CD4-positive, alpha-beta T cell (primary cell): ENCODE measurements at regions of chr5 and their contacts with region 1.

Region 1: GRCh38 chr5:172293054-172293744 is 9.6 kb upstream of the UBTD2 start:
- DNase-seq: peak; percentile 28 to 83 (median 50)
- ATAC-seq: peak; percentile 100
- H3K4me3 ChIP-seq: no peak overlapping the region
- H3K4me3 Mint-ChIP-seq: no peak overlapping the region
- H3K27ac ChIP-seq: no peak overlapping the region
- H3K27ac Mint-ChIP-seq: no peak overlapping the region
- H3K4me1 ChIP-seq: peaks cover 6% of the 10 kb centered on the region
- H3K4me1 Mint-ChIP-seq: peaks cover 4% of the 10 kb centered on the region
- H3K27me3 ChIP-seq: no peaks in the 10 kb centered on the region
- H3K27me3 Mint-ChIP-seq: no peaks in the 10 kb centered on the region
- CTCF ChIP-seq: peak; percentile 83

Region 2: GRCh38 chr5:171418316-171418981 is 874.8 kb before region 1 on chr5:
- CTCF ChIA-PET with region 1: no interaction called
- POLR2A ChIA-PET with region 1: no interaction called
- intact Hi-C with region 1: loop called in 1 of 2 experiments (anchors 5 kb)
- DNase-seq: peak in 12 of 14 experiments; percentile 15 to 67 (median 35)
- ATAC-seq: peak; percentile 54
- H3K4me3 ChIP-seq: peak overlapping the region; percentile 43
- H3K4me3 Mint-ChIP-seq: peak overlapping the region; percentile 80
- H3K27ac ChIP-seq: no peak overlapping the region
- H3K27ac Mint-ChIP-seq: no peak overlapping the region
- H3K4me1 ChIP-seq: peaks cover 22% of the 10 kb centered on the region
- H3K4me1 Mint-ChIP-seq: peaks cover 17% of the 10 kb centered on the region
- H3K27me3 ChIP-seq: peaks cover 16 to 24% of the 10 kb centered on the region in 2 experiments
- H3K27me3 Mint-ChIP-seq: peaks cover 30% of the 10 kb centered on the region
- CTCF ChIP-seq: peak; percentile 68

Region 3: GRCh38 chr5:171907725-171908343 is 385.4 kb before region 1 on chr5:
- CTCF ChIA-PET with region 1: interaction called, 6 read pairs
- POLR2A ChIA-PET with region 1: interaction called, 3 read pairs
- intact Hi-C with region 1: loop called (anchors 1 to 2 kb)
- DNase-seq: peak in 12 of 14 experiments; percentile 8 to 73 (median 18)
- ATAC-seq: peak; percentile 83
- H3K4me3 ChIP-seq: no peak overlapping the region
- H3K4me3 Mint-ChIP-seq: no peak overlapping the region
- H3K27ac ChIP-seq: no peak overlapping the region
- H3K27ac Mint-ChIP-seq: no peak overlapping the region
- H3K4me1 ChIP-seq: peaks cover 6% of the 10 kb centered on the region
- H3K4me1 Mint-ChIP-seq: peaks cover 58% of the 10 kb centered on the region
- H3K27me3 ChIP-seq: no peaks in the 10 kb centered on the region
- H3K27me3 Mint-ChIP-seq: no peaks in the 10 kb centered on the region
- CTCF ChIP-seq: peak; percentile 82

Region 4: DNA sequence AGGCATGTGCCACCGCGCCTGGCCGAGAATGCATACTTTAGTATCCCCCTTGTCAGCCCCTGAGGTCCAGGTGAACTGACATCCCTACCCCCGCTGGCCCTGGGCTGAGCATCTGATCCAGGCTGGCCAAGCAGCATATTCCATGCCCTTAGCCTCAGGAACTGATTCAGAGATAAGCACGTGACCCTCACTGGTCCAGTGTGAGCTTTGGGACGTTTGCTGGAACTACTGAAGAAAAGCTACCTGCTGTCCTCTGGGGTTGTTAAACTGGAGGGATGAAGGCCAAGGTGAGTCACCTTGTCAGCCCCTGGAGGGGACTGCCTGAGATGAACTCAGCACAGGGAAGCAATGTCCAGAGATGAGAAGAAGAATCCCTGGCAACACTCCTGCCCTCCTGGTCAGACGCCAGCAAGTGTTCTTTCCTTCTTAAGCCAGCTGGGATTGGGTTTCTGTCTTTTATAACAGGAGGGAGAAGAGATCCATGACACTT is 227.7 kb before region 1 on chr5:
- CTCF ChIA-PET with region 1: interaction called, 3 read pairs
- POLR2A ChIA-PET with region 1: no interaction called
- intact Hi-C with region 1: loop called in 1 of 2 experiments (anchors 5 kb)
- DNase-seq: peak in 1 of 14 experiments; percentile 34
- ATAC-seq: no peak
- H3K4me3 ChIP-seq: no peak overlapping the region
- H3K4me3 Mint-ChIP-seq: no peak overlapping the region
- H3K27ac ChIP-seq: peak overlapping the region; percentile 69 to 84
- H3K27ac Mint-ChIP-seq: peak overlapping the region; percentile 89
- H3K4me1 ChIP-seq: peaks cover 44% of the 10 kb centered on the region
- H3K4me1 Mint-ChIP-seq: peaks cover 76% of the 10 kb centered on the region
- H3K27me3 ChIP-seq: no peaks in the 10 kb centered on the region
- H3K27me3 Mint-ChIP-seq: no peaks in the 10 kb centered on the region
- CTCF ChIP-seq: no peak

Region 5: GRCh38 chr5:172322028-172322965 is 29.1 kb after region 1 on chr5:
- CTCF ChIA-PET with region 1: no interaction called
- POLR2A ChIA-PET with region 1: no interaction called
- intact Hi-C with region 1: no loop called
- DNase-seq: no peak
- ATAC-seq: no peak
- H3K4me3 ChIP-seq: no peak overlapping the region
- H3K4me3 Mint-ChIP-seq: no peak overlapping the region
- H3K27ac ChIP-seq: no peak overlapping the region
- H3K27ac Mint-ChIP-seq: no peak overlapping the region
- H3K4me1 ChIP-seq: no peaks in the 10 kb centered on the region
- H3K4me1 Mint-ChIP-seq: no peaks in the 10 kb centered on the region
- H3K27me3 ChIP-seq: no peaks in the 10 kb centered on the region
- H3K27me3 Mint-ChIP-seq: no peaks in the 10 kb centered on the region
- CTCF ChIP-seq: no peak

Region 6: GRCh38 chr5:172347496-172348052 is 54.4 kb after region 1 on chr5:
- CTCF ChIA-PET with region 1: no interaction called
- POLR2A ChIA-PET with region 1: no interaction called
- intact Hi-C with region 1: no loop called
- DNase-seq: no peak
- ATAC-seq: no peak
- H3K4me3 ChIP-seq: no peak overlapping the region
- H3K4me3 Mint-ChIP-seq: no peak overlapping the region
- H3K27ac ChIP-seq: no peak overlapping the region
- H3K27ac Mint-ChIP-seq: no peak overlapping the region
- H3K4me1 ChIP-seq: no peaks in the 10 kb centered on the region
- H3K4me1 Mint-ChIP-seq: no peaks in the 10 kb centered on the region
- H3K27me3 ChIP-seq: no peaks in the 10 kb centered on the region
- H3K27me3 Mint-ChIP-seq: no peaks in the 10 kb centered on the region
- CTCF ChIP-seq: no peak

Region 7: DNA sequence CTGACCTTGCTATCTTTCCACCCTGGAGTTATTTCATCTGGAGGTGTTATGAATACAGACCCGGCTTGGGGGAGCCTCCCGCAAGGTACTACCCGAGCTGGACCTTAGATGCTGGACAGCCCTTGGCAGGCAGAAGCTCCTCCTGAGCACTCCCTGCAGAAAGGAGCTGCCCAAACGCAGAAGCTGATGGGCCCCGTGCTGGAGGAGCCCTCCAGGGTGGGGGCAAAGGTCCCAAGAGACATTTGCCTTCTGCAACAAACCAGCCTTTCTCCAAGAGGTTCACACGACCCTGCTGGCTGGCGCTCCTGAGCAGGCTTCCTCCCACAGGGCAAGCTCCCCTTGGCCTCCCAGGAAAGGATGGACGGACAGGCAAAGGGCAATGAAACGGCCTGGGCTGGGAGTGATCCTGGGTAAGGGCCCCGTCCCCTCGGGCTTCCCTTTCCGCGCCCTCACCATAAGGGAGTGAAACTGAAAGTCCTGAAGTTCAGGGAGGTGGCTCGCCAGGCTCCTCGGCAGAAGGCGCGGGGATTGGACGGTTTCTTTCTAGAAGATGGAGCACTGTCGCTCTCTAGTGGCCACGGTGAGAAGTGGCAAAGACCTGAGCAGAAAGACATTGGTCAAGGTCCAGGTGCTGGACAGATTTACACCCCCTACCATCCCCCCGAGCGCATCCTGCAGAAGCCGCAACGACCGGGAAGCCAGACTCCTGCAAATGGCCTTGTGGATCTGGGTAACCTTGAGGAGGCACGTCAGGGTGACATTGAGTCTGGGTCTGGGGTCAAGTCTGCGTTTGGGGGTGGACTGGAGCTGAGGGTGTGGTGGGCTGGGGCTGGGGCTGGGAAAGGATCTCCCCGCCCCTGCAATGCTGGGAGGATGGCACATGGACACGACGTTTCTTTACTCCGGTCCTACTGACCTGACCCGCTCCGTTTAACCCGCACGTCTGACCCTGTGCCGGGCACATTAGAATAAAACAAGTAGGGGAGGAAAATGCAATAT is 404.2 kb after region 1 on chr5:
- CTCF ChIA-PET with region 1: no interaction called
- POLR2A ChIA-PET with region 1: no interaction called
- intact Hi-C with region 1: loop called in 1 of 2 experiments (anchors 10 kb)
- DNase-seq: peak; percentile 74 to 92 (median 81)
- ATAC-seq: peak; percentile 97
- H3K4me3 ChIP-seq: peak overlapping the region; percentile 89
- H3K4me3 Mint-ChIP-seq: peak overlapping the region; percentile 91
- H3K27ac ChIP-seq: peak overlapping the region in 1 of 2 donors; percentile 75
- H3K27ac Mint-ChIP-seq: peak overlapping the region; percentile 72
- H3K4me1 ChIP-seq: peaks cover 24% of the 10 kb centered on the region
- H3K4me1 Mint-ChIP-seq: peaks cover 24% of the 10 kb centered on the region
- H3K27me3 ChIP-seq: peaks cover 9 to 10% of the 10 kb centered on the region in 2 experiments
- H3K27me3 Mint-ChIP-seq: peaks cover 17% of the 10 kb centered on the region
- CTCF ChIP-seq: peak; percentile 85